ENCODE measurements at regions of chr6 and their contacts with region 1.

Region 1: DNA sequence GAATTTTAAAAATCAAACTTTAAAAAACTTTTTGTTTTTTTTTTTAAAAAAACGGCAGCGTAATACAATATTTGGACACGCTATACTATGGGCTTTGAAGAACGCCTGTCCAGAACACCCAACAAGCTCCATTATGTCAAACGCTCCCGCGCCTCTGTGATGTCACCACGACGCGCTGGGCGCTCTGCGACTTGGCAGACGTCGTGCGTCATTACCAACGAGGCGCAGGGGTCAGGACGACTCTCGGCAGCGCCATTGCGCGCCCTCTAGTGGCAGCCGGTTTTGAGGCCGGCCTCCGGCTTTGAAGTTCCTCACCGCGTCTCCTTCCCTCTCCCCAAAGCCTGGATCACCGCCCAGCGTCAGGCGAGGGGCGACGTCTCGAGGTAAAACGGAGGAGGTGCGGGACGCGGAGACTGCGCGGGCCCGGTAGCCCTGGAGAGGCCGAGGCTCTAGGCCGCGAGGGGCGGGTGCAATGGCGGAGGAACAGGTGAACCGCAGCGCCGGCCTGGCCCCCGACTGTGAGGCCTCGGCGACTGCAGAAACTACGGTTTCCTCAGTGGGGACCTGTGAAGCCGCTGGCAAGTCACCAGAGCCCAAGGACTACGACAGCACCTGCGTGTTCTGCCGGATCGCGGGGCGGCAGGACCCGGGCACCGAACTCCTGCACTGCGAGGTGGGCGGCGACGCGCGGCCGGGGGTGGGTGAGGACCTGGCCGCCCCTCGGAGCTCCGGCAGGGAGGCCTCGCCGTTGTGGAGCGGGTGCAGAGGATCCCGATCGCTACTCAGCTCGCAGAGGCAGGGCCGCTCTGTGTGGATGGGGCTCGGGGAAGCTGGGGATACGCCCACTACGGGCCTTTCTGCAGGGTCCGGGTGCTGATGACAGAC is at the start of gene HINT3:
- H3K4me3 ChIP-seq: peak within 1 kb of the TSS; percentile 83
- H3K27ac ChIP-seq: peak within 1 kb of the TSS; percentile 94
- H3K4me1 ChIP-seq: no peaks in the 10 kb centered on the region
- CTCF ChIP-seq: peak; percentile 100

Region 2: DNA sequence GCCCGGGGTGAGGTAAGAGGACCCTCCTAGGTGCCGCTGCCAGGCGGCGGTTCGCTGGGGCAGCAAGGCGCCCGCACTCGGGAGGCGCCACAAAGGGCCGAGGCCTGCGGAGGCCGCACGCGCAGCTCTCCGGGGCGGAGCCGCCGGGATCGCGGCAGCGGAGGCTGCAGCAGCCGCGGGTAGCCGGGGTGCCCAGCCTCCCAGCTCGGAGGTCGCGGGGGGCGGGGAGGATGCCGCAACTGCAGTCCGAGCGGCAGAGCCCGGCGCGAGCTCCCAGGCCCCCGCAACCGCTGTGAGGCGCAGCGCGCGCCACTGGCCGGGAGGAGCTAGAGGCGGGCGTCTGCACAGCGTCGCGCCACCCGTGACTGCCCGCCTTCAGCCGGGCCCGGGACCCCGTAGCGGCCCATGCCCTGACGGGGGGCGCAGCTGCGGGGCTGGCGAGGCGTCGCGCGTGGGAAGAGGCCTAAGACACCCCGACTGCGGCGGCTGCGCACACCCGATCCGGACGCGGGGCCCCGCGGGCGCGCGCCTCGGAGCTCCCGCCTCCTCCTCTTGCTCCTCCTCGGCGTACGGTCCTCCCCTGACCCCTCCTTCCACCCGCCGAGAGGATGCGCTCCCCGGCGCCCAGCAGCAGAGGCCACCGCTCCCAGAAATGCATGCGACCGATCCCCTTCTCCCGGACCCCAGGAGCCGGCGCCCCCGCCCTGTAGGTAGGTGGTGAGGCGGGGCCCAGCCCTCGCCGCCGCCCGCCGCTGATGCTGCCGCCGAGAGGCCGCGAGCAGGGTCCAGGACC is 166.2 kb before region 1 on chr6 and contains the start of gene NCOA7:
- CTCF ChIA-PET with region 1: interaction called, 30 read pairs
- POLR2A ChIA-PET with region 1: interaction called, 54 read pairs
- H3K4me3 ChIP-seq: peak within 1 kb of the TSS; percentile 70
- H3K27ac ChIP-seq: peak within 1 kb of the TSS; percentile 91
- H3K4me1 ChIP-seq: peaks cover 31% of the 10 kb centered on the region
- CTCF ChIP-seq: peak; percentile 66; the same call in 1 of the 2 replicates

Region 3: DNA sequence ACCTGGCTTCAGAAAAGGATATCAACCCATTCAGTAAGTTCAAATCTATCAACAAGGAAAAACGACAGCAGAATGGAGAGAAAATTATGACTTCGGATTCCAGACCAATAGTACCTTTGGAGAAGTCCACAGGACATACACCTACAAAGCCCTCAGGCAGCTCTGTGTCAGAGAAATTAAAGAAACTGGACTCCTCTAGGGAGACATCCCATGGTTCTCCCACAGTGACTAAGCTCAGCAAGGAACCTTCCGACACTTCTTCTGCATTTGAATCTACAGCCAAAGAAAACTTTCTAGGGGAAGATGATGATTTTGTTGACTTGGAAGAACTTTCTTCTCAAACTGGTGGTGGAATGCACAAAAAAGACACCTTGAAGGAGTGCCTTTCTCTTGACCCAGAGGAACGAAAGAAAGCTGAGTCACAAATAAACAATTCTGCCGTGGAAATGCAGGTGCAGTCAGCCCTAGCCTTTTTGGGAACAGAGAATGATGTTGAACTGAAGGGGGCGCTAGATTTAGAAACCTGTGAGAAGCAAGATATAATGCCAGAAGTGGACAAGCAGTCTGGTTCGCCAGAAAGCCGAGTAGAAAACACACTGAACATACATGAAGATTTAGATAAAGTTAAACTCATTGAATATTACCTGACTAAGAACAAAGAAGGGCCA is 67.6 kb before region 1 on chr6:
- CTCF ChIA-PET with region 1: interaction called, 39 read pairs
- POLR2A ChIA-PET with region 1: no interaction called
- H3K4me3 ChIP-seq: no peak overlapping the region
- H3K27ac ChIP-seq: no peak overlapping the region
- H3K4me1 ChIP-seq: 0 out of 2 replicates have a peak, but pooled peaks cover 4% of the 10 kb centered on the region
- CTCF ChIP-seq: no peak

Region 4: DNA sequence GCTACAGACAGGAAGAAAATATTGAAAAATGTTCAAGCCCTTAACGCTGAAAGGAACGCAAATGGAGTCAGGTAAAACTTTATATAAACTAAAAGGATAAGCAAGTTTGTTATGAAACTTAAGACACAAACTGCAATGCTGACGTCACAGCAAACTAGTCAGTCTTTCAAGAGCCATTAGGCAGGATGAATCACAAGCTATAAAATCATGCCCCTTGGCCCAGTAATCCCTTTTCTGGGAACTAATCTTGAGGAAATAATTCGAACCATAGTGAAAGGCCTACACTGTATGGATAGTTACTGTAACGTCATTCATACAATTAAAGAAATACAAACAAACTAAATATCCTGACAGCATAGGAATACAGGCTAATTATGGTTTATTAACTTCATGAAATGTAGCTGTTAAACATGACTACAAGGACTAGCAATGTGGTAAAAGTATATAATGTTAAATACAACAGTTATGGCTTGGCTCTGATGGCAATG is 42.8 kb before region 1 on chr6:
- CTCF ChIA-PET with region 1: interaction called, 62 read pairs
- POLR2A ChIA-PET with region 1: interaction called, 3 read pairs
- H3K4me3 ChIP-seq: no peak overlapping the region
- H3K27ac ChIP-seq: peak overlapping the region; percentile 4; the same call in 1 of the 2 replicates
- H3K4me1 ChIP-seq: peaks cover 13% of the 10 kb centered on the region
- CTCF ChIP-seq: no peak

Region 5: GRCh38 chr6:125968493-125968892 is 11.7 kb after region 1 on chr6:
- CTCF ChIA-PET with region 1: interaction called, 59 read pairs
- POLR2A ChIA-PET with region 1: interaction called, 3 read pairs
- H3K4me3 ChIP-seq: no peak overlapping the region
- H3K27ac ChIP-seq: no peak overlapping the region
- H3K4me1 ChIP-seq: no peaks in the 10 kb centered on the region
- CTCF ChIP-seq: no peak

Region 6: DNA sequence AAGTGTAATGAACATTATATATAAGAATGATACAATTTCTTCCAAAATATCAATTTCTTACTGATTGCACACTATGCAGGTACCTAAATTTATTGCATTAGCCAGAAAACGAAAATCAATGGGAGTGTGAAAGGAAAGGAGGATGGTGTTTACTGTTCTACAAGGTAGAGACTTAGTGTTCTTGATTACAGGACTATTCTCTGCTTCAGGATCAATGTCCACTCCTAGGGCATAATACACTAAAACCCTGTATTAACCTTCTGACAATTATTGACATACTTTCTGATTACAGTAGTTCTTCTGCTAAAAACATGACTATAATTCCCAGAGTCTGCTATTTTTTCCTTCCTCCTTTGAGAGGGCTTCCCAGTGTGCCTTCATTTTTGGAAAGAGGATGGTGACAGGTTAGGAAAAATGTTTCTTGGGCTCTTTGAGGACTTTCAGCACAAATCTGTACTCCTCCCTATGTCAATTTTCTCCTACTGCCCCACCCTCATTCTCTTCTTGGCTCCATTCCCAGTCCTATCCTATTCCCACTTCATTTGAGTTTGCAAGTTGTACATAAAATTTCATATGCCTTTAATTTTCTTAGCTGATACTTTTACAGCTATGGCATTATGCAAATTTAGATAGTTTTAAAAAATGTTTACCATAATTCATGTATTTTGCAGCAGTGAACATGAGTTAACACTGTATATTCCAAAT is 662.0 kb after region 1 on chr6:
- CTCF ChIA-PET with region 1: no interaction called
- POLR2A ChIA-PET with region 1: no interaction called
- H3K4me3 ChIP-seq: no peak overlapping the region
- H3K27ac ChIP-seq: no peak overlapping the region
- H3K4me1 ChIP-seq: no peaks in the 10 kb centered on the region
- CTCF ChIP-seq: no peak

Measured in HEK293 (cell line).